AG04449 (cell line): ENCODE measurements at regions of chr2 and their contacts with region 1.

Region 1: DNA sequence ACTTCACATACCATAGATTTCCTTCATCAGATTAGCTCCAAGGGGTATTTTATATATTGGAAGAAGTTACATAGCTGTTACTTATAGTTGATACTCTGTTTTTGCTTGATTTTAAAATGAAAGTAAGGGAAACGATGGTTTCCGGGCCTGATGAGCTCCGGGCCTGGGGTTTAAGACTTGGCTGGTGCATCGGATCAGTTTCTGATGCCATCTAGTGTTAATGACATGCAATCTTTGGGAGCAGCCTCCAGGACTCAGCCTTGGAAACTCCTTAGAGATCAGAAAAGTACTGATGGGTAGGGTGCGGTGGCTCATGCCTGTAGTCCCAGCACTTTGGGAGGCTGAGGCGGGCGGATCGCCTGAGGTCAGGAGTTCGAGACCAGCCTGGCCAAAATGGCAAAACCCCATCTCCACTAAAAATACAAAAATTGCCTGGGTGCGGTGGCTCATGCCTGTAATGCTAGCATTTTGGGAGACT is 47.1 kb upstream of the CNOT11 start:
- DNase-seq: peak; percentile 24
- H3K4me3 ChIP-seq: no peak overlapping the region
- CTCF ChIP-seq: peak; percentile 63

Region 2: DNA sequence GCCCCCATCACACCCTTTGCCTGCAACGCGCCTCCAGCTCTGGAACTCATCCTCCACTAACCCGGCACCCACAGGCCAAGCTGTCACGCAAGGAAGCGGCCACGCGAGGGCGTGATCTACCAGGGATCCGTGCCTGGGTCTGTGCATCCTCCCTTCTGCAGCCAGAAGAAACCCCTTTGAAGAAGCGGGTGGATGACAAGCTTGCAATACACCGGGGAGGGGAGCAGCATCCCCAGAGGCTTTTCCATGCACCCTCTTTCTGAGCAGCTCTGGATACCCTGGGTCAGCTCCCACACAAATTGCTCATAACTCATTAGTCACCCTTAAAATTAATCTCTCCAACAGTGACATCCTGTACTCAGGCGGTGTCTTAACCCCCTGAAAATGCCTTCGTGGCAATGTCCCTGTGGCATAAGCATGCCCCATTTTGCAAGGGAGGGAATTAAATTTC is 595.2 kb before region 1 on chr2:
- CTCF ChIA-PET with region 1: interaction called, 46 read pairs
- POLR2A ChIA-PET with region 1: no interaction called
- DNase-seq: no peak
- H3K4me3 ChIP-seq: no peak overlapping the region
- CTCF ChIP-seq: peak; percentile 90

Region 3: GRCh38 chr2:101030863-101031554 is 174.6 kb before region 1 on chr2:
- CTCF ChIA-PET with region 1: interaction called, 132 read pairs
- POLR2A ChIA-PET with region 1: no interaction called
- DNase-seq: no peak
- H3K4me3 ChIP-seq: no peak overlapping the region
- CTCF ChIP-seq: no peak

Region 4: GRCh38 chr2:101064868-101065549 is 140.6 kb before region 1 on chr2:
- CTCF ChIA-PET with region 1: interaction called, 10 read pairs
- POLR2A ChIA-PET with region 1: no interaction called
- DNase-seq: no peak
- H3K4me3 ChIP-seq: no peak overlapping the region
- CTCF ChIP-seq: no peak

Region 5: GRCh38 chr2:101188683-101189405 is 16.7 kb before region 1 on chr2:
- CTCF ChIA-PET with region 1: interaction called, 98 read pairs
- POLR2A ChIA-PET with region 1: no interaction called
- DNase-seq: no peak
- H3K4me3 ChIP-seq: no peak overlapping the region
- CTCF ChIP-seq: peak; percentile 73

Region 6: DNA sequence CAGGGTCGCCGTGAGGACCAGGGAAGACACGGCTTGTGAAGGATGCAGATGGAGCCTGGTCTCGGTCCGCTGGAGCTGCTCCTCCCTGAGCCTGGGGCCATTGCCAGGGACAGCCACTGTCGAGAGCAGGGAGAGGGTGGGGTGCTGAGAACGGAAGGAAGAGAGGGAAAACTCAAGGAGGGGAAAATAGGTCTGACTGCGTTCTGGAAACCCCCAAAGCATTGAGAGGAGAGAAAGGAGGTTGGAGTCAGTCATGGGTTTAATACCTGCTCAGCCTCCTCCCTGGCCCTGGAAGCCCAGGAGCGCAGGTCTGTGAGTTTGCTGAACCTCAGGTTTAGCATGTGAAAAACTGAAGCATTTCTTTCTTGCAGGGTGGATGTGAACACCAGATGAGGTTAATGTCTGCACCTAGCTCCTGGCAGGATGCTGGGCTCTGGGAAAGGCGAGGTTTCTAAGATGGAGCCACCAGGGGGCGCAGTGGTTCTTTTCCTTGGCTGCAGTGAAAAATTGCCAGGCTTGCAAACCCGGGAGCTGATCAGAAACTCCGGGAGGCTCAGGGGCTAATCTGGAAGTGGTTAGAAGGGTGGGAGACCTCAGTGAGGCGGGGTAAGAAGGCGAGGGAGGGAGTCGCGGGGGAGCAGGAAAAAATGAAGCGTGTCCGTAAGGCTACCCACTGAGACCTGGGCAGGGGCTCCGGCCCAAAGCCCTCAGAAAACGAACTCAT is 136.5 kb after region 1 on chr2:
- CTCF ChIA-PET with region 1: no interaction called
- POLR2A ChIA-PET with region 1: no interaction called
- DNase-seq: no peak
- H3K4me3 ChIP-seq: peak overlapping the region; percentile 39
- CTCF ChIP-seq: peak; percentile 81